PC-9 (cell line): ENCODE measurements at regions of chr6 and their contacts with region 1.

Region 1: DNA sequence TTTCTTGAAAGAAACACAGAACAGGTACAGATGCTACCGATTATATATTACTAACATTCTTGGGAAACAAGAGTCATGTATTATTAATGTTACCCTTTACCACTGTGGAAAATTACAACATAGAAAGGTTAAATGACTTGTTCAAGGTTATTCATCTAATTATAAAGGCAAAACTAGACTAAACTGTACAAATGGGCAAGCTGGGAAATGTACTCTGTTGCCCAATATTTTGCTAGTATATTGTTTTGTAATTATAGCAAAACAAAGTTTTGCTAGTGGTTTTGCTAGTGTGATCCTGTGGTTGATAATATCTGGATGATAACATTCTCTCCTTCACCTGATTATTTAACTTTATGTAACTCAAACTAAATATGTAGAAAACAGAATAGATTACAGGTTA is 96.5 kb downstream of the TINAG start:
- DNase-seq: no peak
- H3K4me3 ChIP-seq: no peak overlapping the region
- H3K27ac ChIP-seq: no peak overlapping the region
- H3K4me1 ChIP-seq: no peaks in the 10 kb centered on the region
- H3K27me3 ChIP-seq: no peaks in the 10 kb centered on the region
- CTCF ChIP-seq: no peak

Region 2: GRCh38 chr6:54827010-54827409 is 422.2 kb after region 1 on chr6:
- CTCF ChIA-PET with region 1: no interaction called
- POLR2A ChIA-PET with region 1: no interaction called
- intact Hi-C with region 1: no loop called
- DNase-seq: no peak
- H3K4me3 ChIP-seq: no peak overlapping the region
- H3K27ac ChIP-seq: no peak overlapping the region
- H3K4me1 ChIP-seq: no peaks in the 10 kb centered on the region
- H3K27me3 ChIP-seq: no peaks in the 10 kb centered on the region
- CTCF ChIP-seq: no peak

Region 3: GRCh38 chr6:55250400-55250799 is 845.6 kb after region 1 on chr6:
- CTCF ChIA-PET with region 1: interaction called, 14 read pairs
- POLR2A ChIA-PET with region 1: no interaction called
- intact Hi-C with region 1: no loop called
- DNase-seq: no peak
- H3K4me3 ChIP-seq: no peak overlapping the region
- H3K27ac ChIP-seq: no peak overlapping the region
- H3K4me1 ChIP-seq: no peaks in the 10 kb centered on the region
- H3K27me3 ChIP-seq: no peaks in the 10 kb centered on the region
- CTCF ChIP-seq: no peak